ENCODE measurements at regions of chr12 and their contacts with region 1.

Region 1: DNA sequence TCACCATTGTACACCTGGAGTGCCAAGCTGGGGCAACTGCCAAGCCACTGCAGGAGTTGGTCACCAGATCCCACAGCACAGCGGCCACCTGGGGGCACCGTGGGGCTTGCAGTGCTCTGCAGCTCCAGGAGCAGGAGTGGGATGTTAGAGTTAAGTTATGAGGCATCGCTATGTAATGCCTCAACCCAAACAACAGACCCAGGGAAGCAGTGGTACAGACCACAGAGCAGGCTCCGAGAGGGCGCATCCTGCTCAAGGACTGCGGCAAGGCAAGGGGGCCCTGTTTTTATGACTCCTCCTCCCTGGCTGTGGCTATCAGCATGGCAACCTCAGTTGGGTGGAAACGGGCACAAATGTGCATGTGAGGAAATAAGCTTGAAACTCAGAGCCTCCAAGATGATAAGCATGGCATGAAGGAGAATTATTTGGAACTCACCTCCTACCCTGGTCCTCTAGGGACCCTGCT is 63.1 kb downstream of the ARL6IP4 start:
- DNase-seq: peak; percentile 86
- H3K4me3 Mint-ChIP-seq: no peak overlapping the region
- H3K27ac Mint-ChIP-seq: peak overlapping the region; percentile 3
- H3K4me1 Mint-ChIP-seq: peaks cover 44% of the 10 kb centered on the region
- H3K27me3 Mint-ChIP-seq: no peaks in the 10 kb centered on the region

Region 2: DNA sequence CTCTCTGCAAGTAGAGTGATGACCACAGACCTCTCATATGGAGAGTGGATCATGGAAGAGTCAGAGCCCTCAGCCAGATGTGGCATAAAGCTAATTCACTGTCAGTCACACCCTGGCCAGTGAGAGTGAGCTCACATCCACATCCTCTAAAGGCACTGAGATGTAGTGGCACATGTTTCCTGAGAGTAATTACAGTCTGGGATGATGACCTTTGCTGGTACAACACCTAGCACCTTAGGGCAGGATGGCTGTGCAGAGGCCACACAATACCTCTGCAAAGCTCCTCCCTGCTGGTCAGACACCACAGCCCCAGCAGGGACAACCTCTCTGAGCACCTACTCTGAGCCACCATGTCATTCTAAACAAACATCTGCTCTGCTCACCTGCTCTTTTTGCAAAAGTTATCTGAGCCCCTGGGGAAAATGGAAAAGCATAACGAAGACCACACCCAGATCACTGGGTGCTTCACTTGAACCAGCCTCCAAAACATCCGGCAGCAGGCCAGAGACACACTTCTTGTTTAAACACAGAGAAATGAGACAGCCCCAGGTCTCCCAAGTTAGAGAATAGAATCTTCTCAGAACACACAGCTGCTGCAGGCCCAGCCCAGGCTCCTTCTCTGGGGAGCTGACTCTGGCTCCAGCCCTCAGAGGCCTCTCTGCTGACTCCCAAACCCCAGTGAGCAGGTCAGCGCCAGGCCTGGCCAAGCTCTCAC is 77.0 kb after region 1 on chr12:
- CTCF ChIA-PET with region 1: interaction called, 6 read pairs
- intact Hi-C with region 1: loop called (anchors 1 kb)
- DNase-seq: peak; percentile 75
- H3K4me3 Mint-ChIP-seq: no peak overlapping the region
- H3K27ac Mint-ChIP-seq: peak overlapping the region; percentile 68
- H3K4me1 Mint-ChIP-seq: peaks cover 65% of the 10 kb centered on the region
- H3K27me3 Mint-ChIP-seq: no peaks in the 10 kb centered on the region

Region 3: DNA sequence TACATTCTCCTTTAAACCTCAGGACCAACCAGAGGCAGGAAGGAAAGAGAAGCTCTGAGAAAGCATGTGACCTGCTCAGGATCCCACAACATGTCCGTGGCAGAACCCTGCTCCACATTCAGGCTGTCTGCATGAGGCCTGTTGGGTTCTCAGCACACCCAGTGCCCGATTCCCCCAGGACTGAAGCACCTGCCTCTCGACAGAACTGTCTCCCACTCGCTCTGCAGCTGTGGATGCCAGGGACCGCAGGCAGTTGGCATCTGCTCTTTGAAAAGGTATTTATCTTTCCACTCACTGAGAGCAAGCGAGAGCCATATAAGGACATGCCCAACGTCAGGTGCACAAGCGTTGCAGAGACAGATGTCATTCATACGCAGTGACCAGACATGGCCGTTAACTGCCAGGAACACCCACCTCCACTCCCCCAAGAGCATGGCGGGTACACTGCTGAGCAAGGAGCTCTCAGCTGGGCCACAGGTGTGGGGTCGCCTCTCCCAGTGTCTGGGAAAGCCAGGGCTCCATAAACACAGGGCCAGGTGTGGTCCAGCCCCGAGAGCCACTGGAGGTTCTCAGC is 88.4 kb after region 1 on chr12:
- CTCF ChIA-PET with region 1: interaction called, 3 read pairs
- intact Hi-C with region 1: loop called (anchors 5 kb)
- DNase-seq: peak; percentile 74
- H3K4me3 Mint-ChIP-seq: peak overlapping the region; percentile 77
- H3K27ac Mint-ChIP-seq: peak overlapping the region; percentile 85
- H3K4me1 Mint-ChIP-seq: peaks cover 41% of the 10 kb centered on the region
- H3K27me3 Mint-ChIP-seq: no peaks in the 10 kb centered on the region

Region 4: GRCh38 chr12:123150744-123151456 is 107.3 kb after region 1 on chr12 and contains the start of gene PITPNM2:
- CTCF ChIA-PET with region 1: interaction called, 13 read pairs
- intact Hi-C with region 1: loop called (anchors 1 kb)
- DNase-seq: peak; percentile 63
- H3K4me3 Mint-ChIP-seq: peak within 1 kb of the TSS; percentile 77
- H3K27ac Mint-ChIP-seq: peak within 1 kb of the TSS; percentile 75
- H3K4me1 Mint-ChIP-seq: peaks cover 29% of the 10 kb centered on the region
- H3K27me3 Mint-ChIP-seq: no peaks in the 10 kb centered on the region
- total RNA-seq, gene PITPNM2: 15.4 TPM

Region 5: DNA sequence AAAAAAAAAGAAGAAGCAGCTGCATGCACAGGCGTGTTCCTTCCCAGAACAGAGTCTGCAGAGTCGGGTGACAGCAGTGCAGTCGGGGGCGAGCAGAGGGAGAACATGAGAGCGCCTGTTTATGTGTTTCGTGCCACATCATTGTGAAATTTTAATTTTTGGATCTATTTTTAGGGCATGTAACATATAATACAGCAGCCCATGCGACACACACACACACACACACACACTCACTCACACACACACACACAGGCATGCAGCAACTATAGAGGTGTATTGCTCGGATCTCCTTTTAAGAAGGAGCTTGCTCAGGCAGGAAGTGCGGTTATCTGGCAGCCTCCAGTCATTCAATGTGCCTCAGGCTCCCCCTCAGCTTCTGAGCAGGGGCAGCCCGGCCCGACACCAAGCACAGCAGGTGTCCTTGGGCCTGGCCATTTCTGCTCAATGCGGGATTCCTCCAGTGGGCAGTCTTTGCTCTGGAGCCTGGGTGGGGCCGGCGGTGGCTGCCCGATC is 1001.3 kb after region 1 on chr12:
- CTCF ChIA-PET with region 1: no interaction called
- intact Hi-C with region 1: no loop called
- DNase-seq: peak; percentile 47
- H3K4me3 Mint-ChIP-seq: no peak overlapping the region
- H3K27ac Mint-ChIP-seq: no peak overlapping the region
- H3K4me1 Mint-ChIP-seq: peaks cover 3% of the 10 kb centered on the region
- H3K27me3 Mint-ChIP-seq: no peaks in the 10 kb centered on the region